Activated CD4-positive, alpha-beta T cell treated with anti-CD3 and anti-CD28 coated beads for 36 hours (primary cell): ENCODE measurements at regions of chr13 and their contacts with region 1.

Region 1: DNA sequence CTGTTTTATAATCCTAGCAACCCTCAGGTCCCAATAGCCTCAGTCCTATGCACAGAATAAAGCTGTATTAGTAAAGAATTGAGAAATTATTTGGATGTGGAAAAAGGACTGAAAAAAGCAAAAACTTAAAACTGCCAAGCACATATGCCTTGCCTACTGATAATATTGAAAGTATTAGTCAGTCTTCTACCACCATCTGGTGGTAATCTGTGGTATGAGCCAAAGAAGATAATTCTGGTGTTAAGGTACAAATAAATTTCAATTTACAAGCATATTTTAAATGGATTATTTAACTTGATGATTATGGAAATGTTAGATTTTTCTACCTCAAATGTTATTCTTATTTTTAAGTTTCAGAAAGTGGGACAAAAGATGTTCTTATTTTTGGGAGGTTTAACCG is 460.3 kb upstream of the KLHL1 start:
- DNase-seq: no peak
- ATAC-seq: no peak
- H3K4me3 Mint-ChIP-seq: no peak overlapping the region
- H3K27ac Mint-ChIP-seq: no peak overlapping the region
- H3K4me1 Mint-ChIP-seq: no peaks in the 10 kb centered on the region
- H3K27me3 Mint-ChIP-seq: no peaks in the 10 kb centered on the region

Region 2: DNA sequence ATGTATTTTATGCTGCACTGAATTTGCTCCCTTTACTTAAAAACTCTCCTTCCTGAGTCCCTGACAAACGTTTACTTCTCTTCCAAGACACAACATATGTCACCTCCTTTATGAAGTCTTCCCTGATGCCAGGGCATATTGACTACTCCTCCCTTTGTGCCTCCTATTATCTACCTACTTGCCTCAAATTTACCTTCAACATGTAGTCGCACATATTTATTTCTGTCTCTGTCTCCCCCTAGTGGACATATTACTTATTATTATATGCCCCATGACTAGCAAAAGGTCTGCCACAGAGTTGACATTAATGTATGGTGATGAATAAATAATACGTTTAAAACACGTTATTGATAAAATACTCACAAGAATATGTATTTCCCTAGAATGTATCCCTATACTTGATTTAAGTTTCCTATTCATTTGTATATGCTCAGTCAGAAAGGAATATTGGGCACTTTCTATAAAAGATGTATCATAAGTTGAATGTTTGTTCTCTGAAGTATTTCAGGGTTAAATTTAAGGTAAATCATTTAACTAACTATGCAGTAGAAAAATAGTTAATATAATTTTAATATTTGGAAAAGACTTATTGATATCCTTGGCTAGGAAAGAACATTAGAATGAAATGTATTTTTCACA is 711.3 kb before region 1 on chr13:
- CTCF ChIA-PET with region 1: no interaction called
- POLR2A ChIA-PET with region 1: no interaction called
- intact Hi-C with region 1: loop called in 1 of 2 experiments (anchors 5 kb)
- DNase-seq: no peak
- ATAC-seq: no peak
- H3K4me3 Mint-ChIP-seq: no peak overlapping the region
- H3K27ac Mint-ChIP-seq: no peak overlapping the region
- H3K4me1 Mint-ChIP-seq: no peaks in the 10 kb centered on the region
- H3K27me3 Mint-ChIP-seq: no peaks in the 10 kb centered on the region

Region 3: DNA sequence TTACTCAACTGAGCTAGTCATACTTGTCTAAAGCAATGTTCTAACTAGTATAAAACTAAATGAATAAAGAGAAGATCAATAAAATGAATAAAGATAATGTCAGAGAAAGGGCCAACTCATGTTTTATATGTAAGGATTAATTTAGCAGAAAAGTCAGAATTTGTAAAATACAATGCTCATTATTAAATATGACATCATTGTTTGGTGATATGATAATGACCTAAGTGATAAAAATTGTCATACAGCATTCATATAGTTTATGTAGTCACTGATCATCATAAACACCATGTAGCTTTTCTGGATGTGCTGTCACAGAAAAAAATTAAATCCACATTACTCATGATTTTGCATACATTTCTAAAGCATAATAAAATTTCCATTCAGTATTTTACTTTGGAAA is 464.1 kb before region 1 on chr13:
- CTCF ChIA-PET with region 1: no interaction called
- POLR2A ChIA-PET with region 1: no interaction called
- intact Hi-C with region 1: loop called in 1 of 2 experiments (anchors 5 kb)
- DNase-seq: no peak
- ATAC-seq: no peak
- H3K4me3 Mint-ChIP-seq: no peak overlapping the region
- H3K27ac Mint-ChIP-seq: no peak overlapping the region
- H3K4me1 Mint-ChIP-seq: no peaks in the 10 kb centered on the region
- H3K27me3 Mint-ChIP-seq: peaks cover 3% of the 10 kb centered on the region

Region 4: DNA sequence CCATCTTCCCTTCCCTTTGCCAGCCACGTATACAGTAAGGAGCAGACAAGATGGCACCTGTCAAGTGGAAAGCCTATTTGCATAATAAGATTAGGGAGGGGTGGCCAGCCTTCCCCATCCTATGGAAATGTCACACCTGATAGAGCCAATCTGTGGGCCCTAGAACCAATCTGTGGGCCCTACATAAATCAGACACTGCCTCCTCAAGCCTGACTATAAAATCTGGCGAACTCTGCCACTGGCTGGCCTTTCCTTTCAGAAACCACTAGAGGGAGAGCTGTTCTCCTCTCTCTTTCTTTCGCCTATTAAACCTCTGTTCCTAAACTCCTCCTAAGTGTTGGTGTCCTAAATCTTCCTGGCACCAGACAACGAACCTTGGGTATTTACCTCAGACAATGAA is 228.8 kb before region 1 on chr13:
- CTCF ChIA-PET with region 1: no interaction called
- POLR2A ChIA-PET with region 1: no interaction called
- intact Hi-C with region 1: no loop called
- DNase-seq: no peak
- ATAC-seq: no peak
- H3K4me3 Mint-ChIP-seq: no peak overlapping the region
- H3K27ac Mint-ChIP-seq: no peak overlapping the region
- H3K4me1 Mint-ChIP-seq: no peaks in the 10 kb centered on the region
- H3K27me3 Mint-ChIP-seq: no peaks in the 10 kb centered on the region